ENCODE measurements at regions of chr11 and their contacts with region 1.

Region 1: DNA sequence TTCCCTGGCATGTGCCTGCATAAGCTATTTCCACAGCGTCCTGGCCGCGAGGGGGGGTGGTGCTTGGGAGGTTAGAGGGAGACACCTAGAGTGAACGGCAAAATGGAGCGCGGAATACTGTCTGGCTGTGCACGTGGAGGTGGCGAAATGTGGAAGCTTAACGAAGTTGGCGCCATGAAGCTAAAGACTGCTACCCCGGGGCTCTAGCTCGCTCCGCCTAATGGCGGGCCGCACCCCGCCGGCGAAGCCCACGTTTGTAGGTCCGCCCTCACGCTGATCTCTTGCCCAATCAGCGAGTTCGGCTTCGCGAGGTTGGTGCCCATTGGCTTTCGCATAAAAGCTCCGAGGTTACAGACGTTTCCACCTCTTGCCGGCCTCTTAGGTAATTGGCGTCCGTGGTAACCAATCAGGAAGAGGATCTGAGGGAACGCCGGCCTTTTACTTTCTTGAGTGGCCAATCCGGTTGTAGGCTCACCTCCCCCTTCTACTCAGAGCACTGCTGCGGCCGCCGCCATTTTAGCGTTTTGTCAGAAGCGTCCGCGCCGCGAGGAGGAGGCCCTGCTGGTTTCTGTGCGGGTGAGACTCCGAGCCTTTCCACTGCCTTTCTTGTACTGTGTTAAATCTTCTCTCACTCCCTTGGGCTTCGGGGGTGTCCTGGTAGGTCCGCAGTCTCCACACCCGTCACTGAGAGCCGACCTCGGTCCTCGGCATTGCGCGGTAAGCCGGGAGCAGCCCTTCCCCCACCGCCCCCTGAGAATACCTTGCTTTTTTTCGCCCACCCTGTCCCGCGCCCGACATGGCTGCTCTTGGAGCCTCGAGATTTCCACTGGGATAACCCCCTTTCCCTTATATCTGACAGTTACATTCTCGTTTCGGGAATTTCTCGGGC is at the start of gene RBM4:
- DNase-seq: peak; percentile 97

Region 2: GRCh38 chr11:66592457-66593302 is 45.7 kb before region 1 on chr11 and contains the starts of genes CCDC87 and CCS:
- CTCF ChIA-PET with region 1: interaction called, 3 read pairs
- POLR2A ChIA-PET with region 1: interaction called, 20 read pairs
- DNase-seq: peak; percentile 100

Region 3: DNA sequence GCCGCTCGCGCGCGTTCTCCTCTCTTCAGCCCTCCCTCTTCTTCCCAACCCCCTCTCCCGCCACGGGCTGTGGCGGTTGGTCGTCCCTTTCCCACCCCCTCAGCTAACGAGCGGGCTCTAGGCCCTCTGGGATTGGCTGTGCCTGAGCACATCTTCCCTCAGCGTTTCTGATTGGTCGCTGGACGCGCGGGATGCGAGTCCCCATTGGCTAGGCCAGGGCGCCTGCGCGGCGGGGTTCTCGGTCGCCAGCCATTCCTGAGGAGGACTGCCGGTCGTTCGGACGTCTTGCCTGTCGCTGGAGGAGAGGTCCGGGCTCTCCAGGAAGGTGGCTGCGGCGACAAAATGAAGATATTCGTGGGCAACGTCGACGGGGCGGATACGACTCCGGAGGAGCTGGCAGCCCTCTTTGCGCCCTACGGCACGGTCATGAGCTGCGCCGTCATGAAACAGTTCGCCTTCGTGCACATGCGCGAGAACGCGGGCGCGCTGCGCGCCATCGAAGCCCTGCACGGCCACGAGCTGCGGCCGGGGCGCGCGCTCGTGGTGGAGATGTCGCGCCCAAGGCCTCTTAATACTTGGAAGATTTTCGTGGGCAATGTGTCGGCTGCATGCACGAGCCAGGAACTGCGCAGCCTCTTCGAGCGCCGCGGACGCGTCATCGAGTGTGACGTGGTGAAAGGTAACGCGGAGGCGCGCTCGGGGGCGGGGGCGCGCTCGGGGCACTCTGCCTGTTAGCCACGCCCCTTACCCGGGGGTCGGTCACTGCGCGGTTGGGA is 21.9 kb before region 1 on chr11 and contains the start of gene RBM14:
- CTCF ChIA-PET with region 1: interaction called, 3 read pairs
- POLR2A ChIA-PET with region 1: interaction called, 84 read pairs
- DNase-seq: peak; percentile 98

Region 4: GRCh38 chr11:66626926-66627325 is 11.5 kb before region 1 on chr11:
- CTCF ChIA-PET with region 1: interaction called, 4 read pairs
- POLR2A ChIA-PET with region 1: interaction called, 21 read pairs
- DNase-seq: no peak

Region 5: GRCh38 chr11:66677599-66678375 is 39.4 kb after region 1 on chr11 and contains the start of gene RBM4B:
- CTCF ChIA-PET with region 1: interaction called, 5 read pairs
- POLR2A ChIA-PET with region 1: interaction called, 23 read pairs
- DNase-seq: peak; percentile 94